Activated CD8-positive, alpha-beta T cell treated with anti-CD3 and anti-CD28 coated beads for 36 hours (primary cell): ENCODE measurements at regions of chr2 and their contacts with region 1.

Region 1: DNA sequence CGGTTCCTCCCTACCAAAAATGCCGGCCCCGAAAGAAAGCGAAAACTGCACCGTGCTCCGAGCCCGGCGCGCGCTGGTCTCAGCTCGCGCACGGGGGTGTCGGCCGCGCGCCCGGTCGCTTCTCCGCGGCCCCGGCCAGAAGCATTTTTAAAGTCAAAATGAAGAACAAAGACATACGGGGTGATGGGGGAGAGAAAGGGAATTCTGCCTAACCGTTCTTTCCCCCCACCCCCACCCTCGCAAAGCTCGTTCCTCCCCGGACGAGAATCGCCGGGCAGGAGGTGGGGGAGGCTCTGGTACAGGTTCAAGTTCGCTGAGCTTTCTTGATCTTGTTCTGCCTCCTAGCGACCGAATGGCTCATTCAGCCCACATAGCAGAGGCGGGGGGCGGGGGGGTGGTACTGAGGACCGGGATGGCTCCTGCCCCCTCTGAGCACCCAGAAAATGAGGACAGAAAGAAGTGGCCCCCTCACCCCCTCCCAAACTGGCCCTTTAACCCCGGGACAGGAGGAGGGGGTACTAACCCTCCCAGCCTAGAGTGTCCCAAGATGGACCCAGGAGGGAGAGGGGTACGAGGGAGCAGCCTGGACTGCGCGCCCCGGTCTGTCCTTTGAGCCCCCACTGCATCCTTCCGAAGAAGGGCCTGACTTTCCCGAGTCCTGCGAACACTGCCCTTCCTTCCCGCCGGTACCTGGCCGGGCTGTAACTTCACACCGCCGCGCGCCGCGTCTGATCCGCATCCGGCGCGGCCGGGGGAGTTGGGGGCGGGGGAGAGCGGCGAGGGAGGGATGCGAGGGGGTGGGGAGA is 3.1 kb downstream of the BCL11A start:
- DNase-seq: peak; percentile 75
- ATAC-seq: peak; percentile 73
- H3K4me3 Mint-ChIP-seq: peak overlapping the region; percentile 79
- H3K27ac Mint-ChIP-seq: no peak overlapping the region
- H3K4me1 Mint-ChIP-seq: peaks cover 26% of the 10 kb centered on the region
- H3K27me3 Mint-ChIP-seq: peaks cover 62% of the 10 kb centered on the region
- CTCF ChIP-seq: peak; percentile 61

Region 2: DNA sequence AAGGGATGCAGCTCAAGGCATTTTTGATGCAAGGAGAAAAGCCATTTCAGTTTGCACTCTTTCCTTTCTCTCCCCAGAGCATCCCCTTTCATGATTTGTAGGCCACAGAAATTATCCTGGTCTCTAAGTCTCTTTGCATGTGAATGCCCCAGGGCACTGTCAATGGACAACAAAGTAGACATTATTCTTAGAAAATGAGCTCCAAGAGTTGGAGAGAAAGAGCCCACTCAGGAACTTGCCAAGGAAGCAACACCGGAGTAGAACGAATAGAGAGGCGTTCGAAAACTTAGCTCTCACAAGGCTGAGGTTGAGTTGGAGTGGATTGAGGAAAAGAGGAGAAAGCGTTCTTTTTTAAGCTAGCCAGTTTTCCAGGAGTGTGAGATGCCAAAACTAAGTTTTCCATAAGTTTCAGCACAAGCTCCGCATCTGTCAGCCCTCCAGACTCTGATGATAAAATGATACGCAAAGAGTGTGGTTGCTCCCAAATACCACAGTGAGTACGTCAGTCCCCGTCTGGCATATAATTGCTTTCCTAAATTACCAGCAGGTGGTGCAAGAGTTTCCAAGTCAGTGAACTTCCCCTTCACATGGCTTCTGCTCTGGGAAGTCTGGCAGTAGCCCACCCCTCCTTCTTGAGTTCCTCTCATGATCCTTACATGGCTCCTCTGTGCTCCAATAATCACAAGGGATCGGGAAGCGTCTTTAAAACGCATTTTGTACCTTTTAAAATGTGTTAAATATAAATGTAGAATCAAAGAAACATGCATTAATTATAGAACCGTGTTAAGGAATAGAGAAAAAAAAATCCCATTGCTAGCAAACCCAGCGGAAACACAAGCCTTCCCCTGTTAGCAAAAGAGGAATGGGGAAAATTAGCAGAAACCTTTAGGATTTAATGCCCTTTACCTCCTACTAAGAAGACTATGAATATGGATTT is 1248.6 kb before region 1 on chr2:
- CTCF ChIA-PET with region 1: interaction called, 3 read pairs
- POLR2A ChIA-PET with region 1: no interaction called
- intact Hi-C with region 1: loop called (anchors 10 kb)
- DNase-seq: peak; percentile 15
- ATAC-seq: no peak
- H3K4me3 Mint-ChIP-seq: no peak overlapping the region
- H3K27ac Mint-ChIP-seq: no peak overlapping the region
- H3K4me1 Mint-ChIP-seq: no peaks in the 10 kb centered on the region
- H3K27me3 Mint-ChIP-seq: no peaks in the 10 kb centered on the region
- CTCF ChIP-seq: peak; percentile 46

Region 3: GRCh38 chr2:59888015-59888414 is 662.4 kb before region 1 on chr2:
- CTCF ChIA-PET with region 1: no interaction called
- POLR2A ChIA-PET with region 1: no interaction called
- intact Hi-C with region 1: loop called (anchors 10 kb)
- DNase-seq: peak; percentile 78
- ATAC-seq: peak; percentile 96
- H3K4me3 Mint-ChIP-seq: peak overlapping the region; percentile 38
- H3K27ac Mint-ChIP-seq: peak overlapping the region; percentile 60
- H3K4me1 Mint-ChIP-seq: peaks cover 43% of the 10 kb centered on the region
- H3K27me3 Mint-ChIP-seq: no peaks in the 10 kb centered on the region
- CTCF ChIP-seq: no peak

Region 4: DNA sequence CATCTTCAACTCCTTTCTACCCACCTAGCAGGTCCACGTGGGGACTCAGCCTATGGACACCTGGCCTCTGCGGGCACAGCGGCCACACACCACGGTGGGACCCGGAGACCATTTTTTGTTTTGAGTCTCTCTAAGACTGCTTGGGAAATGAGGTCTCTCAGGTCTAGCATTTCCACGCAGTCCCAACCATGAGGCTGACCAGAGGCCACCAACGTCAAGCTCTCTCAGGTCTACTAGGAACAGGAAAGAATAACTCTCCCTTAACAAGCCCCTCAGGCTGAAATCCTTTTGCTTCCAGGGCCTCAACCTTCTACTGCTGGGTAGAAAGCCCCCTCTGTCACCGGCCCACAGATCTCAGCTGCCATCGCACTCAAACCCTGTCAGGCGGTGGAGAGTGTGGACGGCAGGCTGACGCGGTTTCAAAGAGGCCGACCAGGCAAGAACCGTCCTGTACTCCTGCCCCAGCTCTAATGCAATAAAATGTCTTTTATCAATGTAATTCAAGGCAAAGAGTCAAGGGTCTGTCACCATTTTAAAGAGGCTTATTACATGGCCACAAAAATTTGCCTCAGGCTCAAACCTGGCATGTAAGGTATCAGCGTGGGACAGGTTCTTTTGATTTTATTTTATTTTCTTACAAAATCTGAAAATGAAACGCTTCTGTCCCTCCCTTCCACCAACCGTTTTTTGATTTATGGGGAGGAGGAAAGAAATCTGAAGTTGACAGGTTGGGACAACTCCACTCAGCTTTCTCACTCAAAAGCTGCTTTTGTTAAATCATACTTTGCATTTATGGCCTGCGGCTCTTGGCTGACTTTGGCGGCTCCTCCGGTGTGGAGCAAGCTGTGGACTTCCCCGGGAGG is 70.9 kb before region 1 on chr2:
- CTCF ChIA-PET with region 1: no interaction called
- POLR2A ChIA-PET with region 1: no interaction called
- intact Hi-C with region 1: no loop called
- DNase-seq: no peak
- ATAC-seq: no peak
- H3K4me3 Mint-ChIP-seq: no peak overlapping the region
- H3K27ac Mint-ChIP-seq: no peak overlapping the region
- H3K4me1 Mint-ChIP-seq: no peaks in the 10 kb centered on the region
- H3K27me3 Mint-ChIP-seq: peaks cover 5% of the 10 kb centered on the region
- CTCF ChIP-seq: no peak

Region 5: GRCh38 chr2:60560734-60561644 is 10.6 kb after region 1 on chr2:
- CTCF ChIA-PET with region 1: interaction called, 12 read pairs
- POLR2A ChIA-PET with region 1: interaction called, 6 read pairs
- intact Hi-C with region 1: no loop called
- DNase-seq: peak; percentile 20
- ATAC-seq: peak; percentile 60
- H3K4me3 Mint-ChIP-seq: no peak overlapping the region
- H3K27ac Mint-ChIP-seq: no peak overlapping the region
- H3K4me1 Mint-ChIP-seq: peaks cover 12% of the 10 kb centered on the region
- H3K27me3 Mint-ChIP-seq: peaks cover 48% of the 10 kb centered on the region
- CTCF ChIP-seq: no peak

Region 6: DNA sequence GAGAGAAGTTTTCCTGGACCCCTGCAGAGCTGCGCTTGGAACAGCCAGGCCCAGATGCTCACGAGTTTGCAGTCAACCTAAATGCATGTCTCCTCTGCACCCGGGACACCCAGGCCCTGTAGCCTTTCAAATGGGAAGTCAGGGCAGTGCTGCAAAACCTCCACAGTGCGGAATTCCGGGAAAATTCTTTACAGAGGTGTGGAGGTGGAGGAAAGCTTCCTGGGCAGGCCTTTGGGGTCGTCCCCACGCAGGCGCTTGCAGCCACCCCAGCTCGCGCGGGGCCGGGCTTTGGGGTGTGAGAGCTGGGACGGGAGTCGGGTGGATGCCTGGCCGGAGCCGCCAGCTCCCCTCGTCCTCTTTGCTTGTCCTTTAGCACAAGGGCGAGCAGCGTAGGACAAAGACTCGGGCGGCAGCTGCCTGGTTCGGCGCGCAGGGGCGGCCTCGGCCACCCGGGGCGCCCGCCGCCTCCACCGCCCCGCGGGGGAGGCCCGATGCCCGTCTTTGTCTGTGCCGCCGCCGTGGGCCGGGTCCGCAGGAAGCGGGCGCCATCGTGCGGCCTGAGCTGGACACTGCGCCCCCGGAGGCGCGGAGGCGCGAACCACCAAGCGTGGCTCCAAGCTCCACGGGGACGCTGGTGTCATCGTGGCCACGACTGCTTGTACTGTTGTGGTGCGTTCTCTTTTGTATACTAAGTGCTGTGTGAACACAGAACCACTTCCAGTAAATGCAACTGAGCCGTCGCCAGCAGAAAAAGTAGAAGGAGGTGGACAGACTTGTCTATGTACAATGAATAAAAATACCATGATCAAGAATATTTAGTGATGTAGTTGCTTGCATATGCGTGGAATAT is 31.3 kb after region 1 on chr2:
- CTCF ChIA-PET with region 1: interaction called, 104 read pairs
- POLR2A ChIA-PET with region 1: no interaction called
- intact Hi-C with region 1: no loop called
- DNase-seq: peak; percentile 75
- ATAC-seq: peak; percentile 99
- H3K4me3 Mint-ChIP-seq: no peak overlapping the region
- H3K27ac Mint-ChIP-seq: no peak overlapping the region
- H3K4me1 Mint-ChIP-seq: peaks cover 2% of the 10 kb centered on the region
- H3K27me3 Mint-ChIP-seq: peaks cover 29% of the 10 kb centered on the region
- CTCF ChIP-seq: peak; percentile 98